Activated CD8-positive, alpha-beta T cell treated with anti-CD3 and anti-CD28 coated beads for 36 hours (primary cell): ENCODE measurements at regions of chr6 and their contacts with region 1.

Region 1: GRCh38 chr6:108260809-108261569 is at the start of gene SNX3:
- DNase-seq: peak; percentile 92
- ATAC-seq: peak; percentile 92
- H3K4me3 Mint-ChIP-seq: peak within 1 kb of the TSS; percentile 85
- H3K27ac Mint-ChIP-seq: peak within 1 kb of the TSS; percentile 93
- H3K4me1 Mint-ChIP-seq: peaks cover 22% of the 10 kb centered on the region
- H3K27me3 Mint-ChIP-seq: no peaks in the 10 kb centered on the region
- CTCF ChIP-seq: no peak
- total RNA-seq, gene SNX3: 62.5 to 68.4 TPM

Region 2: GRCh38 chr6:108274546-108274945 is 13.6 kb after region 1 on chr6:
- CTCF ChIA-PET with region 1: no interaction called
- POLR2A ChIA-PET with region 1: no interaction called
- intact Hi-C with region 1: no loop called
- DNase-seq: no peak
- ATAC-seq: no peak
- H3K4me3 Mint-ChIP-seq: no peak overlapping the region
- H3K27ac Mint-ChIP-seq: no peak overlapping the region
- H3K4me1 Mint-ChIP-seq: no peaks in the 10 kb centered on the region
- H3K27me3 Mint-ChIP-seq: no peaks in the 10 kb centered on the region
- CTCF ChIP-seq: no peak

Region 3: GRCh38 chr6:108294727-108295625 is 34.0 kb after region 1 on chr6 and contains the start of gene AFG1L:
- CTCF ChIA-PET with region 1: interaction called, 4 read pairs
- POLR2A ChIA-PET with region 1: interaction called, 11 read pairs
- intact Hi-C with region 1: no loop called
- DNase-seq: peak; percentile 91
- ATAC-seq: peak; percentile 89
- H3K4me3 Mint-ChIP-seq: peak within 1 kb of the TSS; percentile 90
- H3K27ac Mint-ChIP-seq: peak within 1 kb of the TSS; percentile 100
- H3K4me1 Mint-ChIP-seq: peaks cover 15% of the 10 kb centered on the region
- H3K27me3 Mint-ChIP-seq: no peaks in the 10 kb centered on the region
- CTCF ChIP-seq: no peak
- total RNA-seq, gene AFG1L: 5.6 to 6.3 TPM